Activated CD8-positive, alpha-beta T cell treated with anti-CD3 and anti-CD28 coated beads, Interleukin-2, amount 10 ng/mL, durations not matched to agents 7 days and 5 days (primary cell): ENCODE measurements at regions of chr22 and their contacts with region 1.

Region 1: GRCh38 chr22:30005213-30005857 is 74.9 kb upstream of the HORMAD2 start:
- DNase-seq: peak; percentile 68
- ATAC-seq: peak; percentile 57
- H3K4me3 Mint-ChIP-seq: no peak overlapping the region
- H3K27ac Mint-ChIP-seq: no peak overlapping the region
- H3K4me1 Mint-ChIP-seq: peaks cover 11% of the 10 kb centered on the region
- H3K27me3 Mint-ChIP-seq: no peaks in the 10 kb centered on the region

Region 2: GRCh38 chr22:29587938-29588699 is 417.2 kb before region 1 on chr22:
- CTCF ChIA-PET with region 1: interaction called, 10 read pairs
- POLR2A ChIA-PET with region 1: no interaction called
- DNase-seq: no peak
- ATAC-seq: no peak
- H3K4me3 Mint-ChIP-seq: no peak overlapping the region
- H3K27ac Mint-ChIP-seq: no peak overlapping the region
- H3K4me1 Mint-ChIP-seq: peaks cover 12% of the 10 kb centered on the region
- H3K27me3 Mint-ChIP-seq: no peaks in the 10 kb centered on the region

Region 3: DNA sequence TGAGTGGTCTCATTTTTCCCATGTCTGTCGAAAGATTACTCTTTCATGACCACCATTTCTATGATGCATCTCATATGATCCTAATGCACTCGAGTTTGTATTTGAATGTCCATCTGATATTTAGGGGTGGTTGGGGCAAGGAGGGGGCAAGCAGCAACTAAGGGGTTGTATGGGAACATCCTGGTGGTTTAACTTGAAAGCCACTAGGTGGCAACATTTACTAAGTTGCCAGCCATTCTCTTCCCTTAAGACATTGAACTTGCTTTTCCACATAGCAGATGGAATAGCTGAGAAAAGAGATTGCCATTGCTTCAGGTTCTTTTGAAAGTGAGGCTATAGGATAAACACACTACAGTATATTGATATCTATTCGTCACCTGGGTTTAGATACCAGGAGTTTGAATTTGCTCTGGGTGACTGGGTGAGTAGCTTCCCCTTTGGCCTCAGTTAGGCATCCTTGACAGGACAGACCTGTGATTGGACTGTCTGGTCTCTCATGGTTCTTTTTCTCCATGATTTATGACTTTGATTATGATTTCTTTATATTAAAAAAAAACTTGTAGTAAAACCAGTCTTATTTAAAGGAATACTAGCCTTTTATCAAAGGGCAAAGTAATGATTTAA is 369.5 kb before region 1 on chr22:
- CTCF ChIA-PET with region 1: interaction called, 49 read pairs
- POLR2A ChIA-PET with region 1: no interaction called
- DNase-seq: no peak
- ATAC-seq: peak; percentile 59
- H3K4me3 Mint-ChIP-seq: no peak overlapping the region
- H3K27ac Mint-ChIP-seq: no peak overlapping the region
- H3K4me1 Mint-ChIP-seq: peaks cover 31% of the 10 kb centered on the region
- H3K27me3 Mint-ChIP-seq: no peaks in the 10 kb centered on the region

Region 4: GRCh38 chr22:29701155-29701999 is 304.0 kb before region 1 on chr22:
- CTCF ChIA-PET with region 1: interaction called, 11 read pairs
- POLR2A ChIA-PET with region 1: no interaction called
- DNase-seq: peak; percentile 46
- ATAC-seq: peak; percentile 61
- H3K4me3 Mint-ChIP-seq: no peak overlapping the region
- H3K27ac Mint-ChIP-seq: peak overlapping the region; percentile 39
- H3K4me1 Mint-ChIP-seq: peaks cover 9% of the 10 kb centered on the region
- H3K27me3 Mint-ChIP-seq: peaks cover 2% of the 10 kb centered on the region

Region 5: GRCh38 chr22:29964776-29965175 is 40.6 kb before region 1 on chr22:
- CTCF ChIA-PET with region 1: no interaction called
- POLR2A ChIA-PET with region 1: no interaction called
- DNase-seq: no peak
- ATAC-seq: no peak
- H3K4me3 Mint-ChIP-seq: no peak overlapping the region
- H3K27ac Mint-ChIP-seq: no peak overlapping the region
- H3K4me1 Mint-ChIP-seq: peaks cover 2% of the 10 kb centered on the region
- H3K27me3 Mint-ChIP-seq: no peaks in the 10 kb centered on the region

Region 6: GRCh38 chr22:29979777-29980321 is 25.5 kb before region 1 on chr22:
- CTCF ChIA-PET with region 1: interaction called, 14 read pairs
- POLR2A ChIA-PET with region 1: no interaction called
- DNase-seq: no peak
- ATAC-seq: no peak
- H3K4me3 Mint-ChIP-seq: no peak overlapping the region
- H3K27ac Mint-ChIP-seq: no peak overlapping the region
- H3K4me1 Mint-ChIP-seq: no peaks in the 10 kb centered on the region
- H3K27me3 Mint-ChIP-seq: no peaks in the 10 kb centered on the region

Region 7: GRCh38 chr22:30015846-30016245 is 10.5 kb after region 1 on chr22:
- CTCF ChIA-PET with region 1: interaction called, 17 read pairs
- POLR2A ChIA-PET with region 1: no interaction called
- DNase-seq: no peak
- ATAC-seq: no peak
- H3K4me3 Mint-ChIP-seq: no peak overlapping the region
- H3K27ac Mint-ChIP-seq: no peak overlapping the region
- H3K4me1 Mint-ChIP-seq: peaks cover 4% of the 10 kb centered on the region
- H3K27me3 Mint-ChIP-seq: no peaks in the 10 kb centered on the region

Region 8: GRCh38 chr22:30089655-30089974 is 84.3 kb after region 1 on chr22:
- CTCF ChIA-PET with region 1: interaction called, 11 read pairs
- POLR2A ChIA-PET with region 1: no interaction called
- DNase-seq: no peak
- ATAC-seq: no peak
- H3K4me3 Mint-ChIP-seq: no peak overlapping the region
- H3K27ac Mint-ChIP-seq: no peak overlapping the region
- H3K4me1 Mint-ChIP-seq: peaks cover 22% of the 10 kb centered on the region
- H3K27me3 Mint-ChIP-seq: peaks cover 2% of the 10 kb centered on the region

Region 9: GRCh38 chr22:30159561-30160353 is 154.4 kb after region 1 on chr22:
- CTCF ChIA-PET with region 1: no interaction called
- POLR2A ChIA-PET with region 1: no interaction called
- DNase-seq: no peak
- ATAC-seq: peak; percentile 24
- H3K4me3 Mint-ChIP-seq: no peak overlapping the region
- H3K27ac Mint-ChIP-seq: peak overlapping the region; percentile 88
- H3K4me1 Mint-ChIP-seq: peaks cover 54% of the 10 kb centered on the region
- H3K27me3 Mint-ChIP-seq: no peaks in the 10 kb centered on the region

Region 10: GRCh38 chr22:30340911-30341685 is 335.8 kb after region 1 on chr22:
- CTCF ChIA-PET with region 1: no interaction called
- POLR2A ChIA-PET with region 1: no interaction called
- DNase-seq: no peak
- ATAC-seq: no peak
- H3K4me3 Mint-ChIP-seq: no peak overlapping the region
- H3K27ac Mint-ChIP-seq: no peak overlapping the region
- H3K4me1 Mint-ChIP-seq: no peaks in the 10 kb centered on the region
- H3K27me3 Mint-ChIP-seq: no peaks in the 10 kb centered on the region